ENCODE measurements at regions of chr3 and their contacts with region 1.

Region 1: DNA sequence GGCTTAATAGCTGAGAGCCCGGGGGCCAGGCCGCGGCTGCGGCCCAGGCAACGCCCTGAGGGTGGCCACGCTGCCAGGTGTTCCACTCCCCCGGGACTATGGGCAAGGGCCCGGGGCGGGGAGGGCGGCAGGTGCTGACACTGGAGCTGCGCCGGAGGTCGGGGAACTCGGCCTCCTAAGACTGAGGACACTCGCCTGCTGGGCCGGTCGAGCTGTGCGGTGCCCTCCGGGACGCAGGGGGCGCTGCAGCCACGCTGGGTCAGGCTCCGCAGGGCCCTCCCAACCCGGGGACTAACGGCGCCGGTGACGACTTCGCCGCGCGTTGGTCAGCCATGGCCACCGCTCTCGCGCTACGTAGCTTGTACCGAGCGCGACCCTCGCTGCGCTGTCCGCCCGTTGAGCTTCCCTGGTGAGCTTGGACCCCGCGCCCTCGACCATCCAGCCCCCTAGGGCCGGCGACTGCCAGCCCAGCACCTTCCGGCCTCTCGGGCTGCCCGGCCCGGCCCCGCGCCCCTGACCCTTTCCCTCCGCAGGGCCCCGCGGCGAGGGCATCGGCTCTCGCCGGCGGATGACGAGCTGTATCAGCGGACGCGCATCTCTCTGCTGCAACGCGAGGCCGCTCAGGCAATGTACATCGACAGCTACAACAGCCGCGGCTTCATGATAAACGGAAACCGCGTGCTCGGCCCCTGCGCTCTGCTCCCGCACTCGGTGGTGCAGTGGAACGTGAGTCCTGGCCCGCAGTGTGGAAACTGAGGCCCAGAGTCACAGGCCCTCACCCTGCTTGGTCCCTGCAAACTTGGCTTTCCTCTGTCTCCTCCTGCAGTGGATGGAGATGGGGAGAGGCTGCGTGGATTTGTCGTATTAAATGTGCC is at the start of gene NDUFAF3:
- DNase-seq: peak; percentile 95
- ATAC-seq: peak; percentile 71
- H3K4me3 Mint-ChIP-seq: peak within 1 kb of the TSS; percentile 96
- H3K27ac Mint-ChIP-seq: peak within 1 kb of the TSS; percentile 98
- H3K4me1 Mint-ChIP-seq: peaks cover 31% of the 10 kb centered on the region
- H3K27me3 Mint-ChIP-seq: no peaks in the 10 kb centered on the region
- total RNA-seq, gene NDUFAF3: 78.9 to 82.4 TPM

Region 2: DNA sequence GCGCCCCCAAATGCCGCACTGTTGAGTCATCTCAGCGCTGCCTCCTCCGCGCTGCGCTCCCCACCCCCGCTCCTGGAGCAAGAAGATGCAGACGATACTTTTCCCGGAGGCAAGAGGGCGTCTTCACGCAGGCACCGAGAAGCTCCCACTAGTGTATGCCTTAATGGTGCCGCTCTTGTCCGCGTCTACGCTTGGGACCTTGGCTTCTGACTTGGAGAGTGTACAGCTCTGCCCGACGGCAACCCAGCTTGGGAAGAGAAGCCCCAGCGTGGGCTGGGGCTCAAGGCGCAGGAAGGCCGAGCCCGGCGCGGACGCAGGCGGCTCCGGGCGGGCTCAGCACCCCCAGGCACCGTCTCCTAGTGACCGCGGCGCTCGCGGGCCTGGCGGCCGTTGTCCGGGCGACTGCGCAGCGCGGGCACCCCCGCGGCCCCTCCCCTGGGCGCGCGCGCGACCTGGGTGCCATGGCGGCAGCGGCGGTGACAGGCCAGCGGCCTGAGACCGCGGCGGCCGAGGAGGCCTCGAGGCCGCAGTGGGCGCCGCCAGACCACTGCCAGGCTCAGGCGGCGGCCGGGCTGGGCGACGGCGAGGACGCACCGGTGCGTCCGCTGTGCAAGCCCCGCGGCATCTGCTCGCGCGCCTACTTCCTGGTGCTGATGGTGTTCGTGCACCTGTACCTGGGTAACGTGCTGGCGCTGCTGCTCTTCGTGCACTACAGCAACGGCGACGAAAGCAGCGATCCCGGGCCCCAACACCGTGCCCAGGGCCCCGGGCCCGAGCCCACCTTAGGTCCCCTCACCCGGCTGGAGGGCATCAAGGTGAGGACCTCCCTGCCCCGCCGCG is 32.0 kb before region 1 on chr3 and contains the start of gene P4HTM:
- POLR2A ChIA-PET with region 1: interaction called, 129 read pairs
- DNase-seq: peak; percentile 84
- ATAC-seq: peak; percentile 81
- H3K4me3 Mint-ChIP-seq: peak within 1 kb of the TSS; percentile 88
- H3K27ac Mint-ChIP-seq: peak within 1 kb of the TSS; percentile 91
- H3K4me1 Mint-ChIP-seq: peaks cover 38% of the 10 kb centered on the region
- H3K27me3 Mint-ChIP-seq: no peaks in the 10 kb centered on the region
- total RNA-seq, gene P4HTM: 57.4 to 57.7 TPM

Region 3: DNA sequence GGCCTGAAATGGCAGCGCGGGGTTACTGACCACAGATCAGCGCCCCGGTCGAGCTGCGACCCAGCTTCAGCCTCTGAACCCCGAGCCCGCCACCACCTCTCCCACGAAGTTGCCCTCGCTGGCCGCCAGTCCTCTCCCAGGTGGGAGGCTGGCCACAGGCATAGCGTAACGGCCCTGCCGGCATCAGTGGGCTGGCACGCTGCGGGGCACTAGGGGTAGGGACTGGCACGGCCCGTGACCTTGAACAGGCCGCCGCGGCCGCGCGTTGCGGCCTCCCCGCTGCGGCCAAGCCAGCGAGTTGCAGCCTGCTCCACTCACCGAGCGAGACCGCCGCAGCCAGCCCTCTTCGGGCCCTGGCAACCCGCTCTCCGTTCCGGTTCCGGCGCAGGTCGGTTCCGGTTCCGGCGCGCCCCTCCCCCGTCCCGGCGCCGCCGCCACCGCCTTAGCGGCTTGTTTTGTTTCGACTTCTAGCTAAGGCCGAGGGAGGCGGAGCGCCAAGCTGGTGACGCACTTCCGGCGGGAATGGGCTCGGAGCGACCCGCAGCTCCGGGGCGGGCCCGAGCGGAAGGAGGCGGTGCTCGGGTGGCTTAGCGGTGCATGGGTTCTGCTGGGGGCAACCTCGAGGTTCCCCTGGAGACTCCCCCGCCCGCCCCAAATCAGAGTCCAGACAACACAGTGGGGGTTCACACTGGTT is 98.5 kb after region 1 on chr3 and contains the start of gene USP19:
- POLR2A ChIA-PET with region 1: interaction called, 17 read pairs
- DNase-seq: peak; percentile 95
- ATAC-seq: peak; percentile 93
- H3K4me3 Mint-ChIP-seq: peak within 1 kb of the TSS; percentile 92
- H3K27ac Mint-ChIP-seq: peak within 1 kb of the TSS; percentile 89
- H3K4me1 Mint-ChIP-seq: peaks cover 5% of the 10 kb centered on the region
- H3K27me3 Mint-ChIP-seq: no peaks in the 10 kb centered on the region
- total RNA-seq, gene USP19: 77.8 to 78.2 TPM

Measured in activated naive CD8-positive, alpha-beta T cell treated with anti-CD3 and anti-CD28 coated beads, Interleukin-2, amount 10 ng/mL, durations not matched to agents 7 days and 5 days (primary cell).